ENCODE measurements at regions of chr14 and their contacts with region 1.

Region 1: DNA sequence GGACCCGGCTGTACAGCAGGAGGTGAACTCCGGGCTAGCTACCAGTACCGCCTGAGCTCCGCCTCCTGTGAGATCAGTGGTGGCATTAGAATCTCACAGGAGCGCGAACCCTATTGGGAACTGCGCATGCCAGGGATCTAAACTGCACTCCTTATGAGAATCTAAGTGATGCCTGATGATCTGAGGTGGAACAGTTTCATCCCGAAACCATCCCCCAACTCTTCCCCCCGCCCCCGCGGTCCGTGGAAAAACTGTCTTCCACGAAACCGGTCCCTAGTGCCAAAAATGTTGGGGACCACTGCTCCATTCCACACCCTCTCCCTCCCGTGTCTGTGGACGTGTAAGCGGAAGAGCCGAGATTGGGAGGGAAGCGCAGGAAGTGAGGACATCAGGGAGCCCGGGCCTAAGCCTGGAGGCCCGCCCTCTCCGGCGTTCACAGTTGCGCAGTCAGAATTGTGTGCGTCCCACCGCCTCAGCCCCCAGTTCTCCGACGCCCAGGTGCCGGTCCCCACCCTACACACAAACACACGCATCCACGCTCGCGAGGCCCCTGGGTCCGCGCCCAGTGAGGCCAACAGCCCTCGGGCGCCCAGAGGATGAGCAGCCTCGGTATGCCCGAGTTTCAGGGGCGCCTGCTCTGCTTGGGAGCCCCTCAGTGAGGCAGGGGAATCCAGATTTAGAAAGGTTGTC is 1.8 kb upstream of the RNASE4 start:
- DNase-seq: peak; percentile 88 to 91 (median 89)
- ATAC-seq: peak; percentile 68
- H3K4me3 ChIP-seq: peak overlapping the region; percentile 52
- H3K4me1 ChIP-seq: peaks cover 43% of the 10 kb centered on the region
- CTCF ChIP-seq: no peak

Region 2: GRCh38 chr14:20332788-20333493 is 349.6 kb before region 1 on chr14 and contains the start of gene CCNB1IP1:
- intact Hi-C with region 1: loop called in 1 of 2 experiments (anchors 10 kb)
- DNase-seq: peak in 2 of 3 donors; percentile 40 to 78
- ATAC-seq: peak; percentile 99
- H3K4me3 ChIP-seq: peak within 1 kb of the TSS; percentile 30
- H3K4me1 ChIP-seq: peaks cover 6% of the 10 kb centered on the region
- CTCF ChIP-seq: no peak
- total RNA-seq, gene CCNB1IP1: 27.6 to 36.0 (median 28.0) TPM

Region 3: GRCh38 chr14:20613094-20614037 is 69.2 kb before region 1 on chr14:
- intact Hi-C with region 1: loop called (anchors 5 kb)
- DNase-seq: peak; percentile 85 to 92 (median 86)
- ATAC-seq: peak; percentile 85
- H3K4me3 ChIP-seq: peak overlapping the region; percentile 6
- H3K4me1 ChIP-seq: peaks cover 12% of the 10 kb centered on the region
- CTCF ChIP-seq: peak; percentile 42

Region 4: GRCh38 chr14:20757965-20758364 is 75.4 kb after region 1 on chr14:
- intact Hi-C with region 1: no loop called
- DNase-seq: peak in 1 of 3 donors; percentile 74
- ATAC-seq: no peak
- H3K4me3 ChIP-seq: no peak overlapping the region
- H3K4me1 ChIP-seq: no peaks in the 10 kb centered on the region
- CTCF ChIP-seq: no peak

Region 5: DNA sequence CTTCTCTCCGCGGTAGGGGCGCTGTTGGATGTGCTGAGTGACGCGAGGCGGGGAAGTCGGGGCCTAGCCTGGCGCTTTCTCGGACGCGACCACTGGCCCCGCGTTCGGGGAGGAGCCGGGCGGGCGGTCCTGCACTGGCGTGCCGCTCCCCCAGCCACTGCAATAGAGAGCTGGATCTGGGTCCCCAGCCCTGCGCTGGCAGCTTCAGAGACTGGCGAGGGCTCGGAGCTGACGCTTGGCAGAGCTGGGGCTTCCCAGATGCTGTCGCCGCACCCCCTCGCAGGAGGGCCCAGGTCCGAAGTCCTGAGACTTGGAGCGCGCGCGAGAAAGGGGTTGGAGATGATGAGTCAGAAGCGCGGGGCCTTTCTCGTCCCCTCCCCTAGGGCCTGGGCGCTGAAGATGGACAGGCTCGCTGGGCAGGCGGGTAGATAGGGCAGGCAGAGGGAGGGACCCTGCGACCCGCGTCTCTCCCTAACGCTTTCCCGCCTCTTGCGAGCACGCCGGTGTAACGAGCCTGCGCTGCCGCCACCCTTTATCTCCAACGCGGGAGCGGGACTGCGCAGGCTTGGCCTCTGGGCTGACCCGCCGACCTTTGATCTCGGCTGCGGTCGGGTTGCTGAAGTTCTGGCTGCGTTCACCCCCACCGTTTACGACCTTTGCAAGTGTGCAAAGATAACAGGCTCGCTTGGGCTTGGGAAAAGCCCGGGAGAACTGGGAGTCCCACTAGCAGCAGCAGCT is 421.3 kb after region 1 on chr14:
- intact Hi-C with region 1: loop called in 1 of 2 experiments (anchors 10 kb)
- DNase-seq: peak; percentile 96 to 97 (median 97)
- ATAC-seq: peak; percentile 86
- H3K4me3 ChIP-seq: peak overlapping the region; percentile 42
- H3K4me1 ChIP-seq: peaks cover 64% of the 10 kb centered on the region
- CTCF ChIP-seq: peak; percentile 78

Measured in mucosa of descending colon (tissue), 3 donors.